ENCODE measurements at regions of chr1 and their contacts with region 1.

Region 1: GRCh38 chr1:65148548-65149350 is 746 bp downstream of the AK4 start:
- DNase-seq: peak; percentile 50 to 83
- H3K4me3 ChIP-seq: peak overlapping the region; percentile 43 to 77 (median 59)
- H3K27ac ChIP-seq: peak overlapping the region; percentile 13; the same call in 1 of the 2 replicates
- H3K4me1 ChIP-seq: peaks cover 9 to 15% (median 11%) of the 10 kb centered on the region in 4 experiments
- H3K27me3 ChIP-seq: peaks cover 2 to 22% (median 14%) of the 10 kb centered on the region in 4 experiments; a peak in 6 of 7 replicates
- CTCF ChIP-seq: no peak
- EP300 ChIP-seq: no peak
- POLR2A ChIP-seq: peak; percentile 45 to 70
- RAD21 ChIP-seq: no peak

Region 2: GRCh38 chr1:65159801-65160523 is 11.2 kb after region 1 on chr1:
- CTCF ChIA-PET with region 1: interaction called, 3 read pairs
- POLR2A ChIA-PET with region 1: interaction called, 48 read pairs
- DNase-seq: no peak
- H3K4me3 ChIP-seq: no peak overlapping the region
- H3K27ac ChIP-seq: no peak overlapping the region
- H3K4me1 ChIP-seq: peaks cover 0 to 3% (median 2%) of the 10 kb centered on the region in 4 experiments; a peak in 3 of 7 replicates
- H3K27me3 ChIP-seq: no peaks in the 10 kb centered on the region
- CTCF ChIP-seq: no peak
- EP300 ChIP-seq: no peak
- POLR2A ChIP-seq: no peak
- RAD21 ChIP-seq: no peak

Region 3: GRCh38 chr1:65165269-65165993 is 16.7 kb after region 1 on chr1:
- CTCF ChIA-PET with region 1: interaction called, 3 read pairs
- POLR2A ChIA-PET with region 1: interaction called, 48 read pairs
- DNase-seq: no peak
- H3K4me3 ChIP-seq: no peak overlapping the region
- H3K27ac ChIP-seq: no peak overlapping the region
- H3K4me1 ChIP-seq: peaks cover 0 to 12% (median 4%) of the 10 kb centered on the region in 4 experiments; a peak in 4 of 7 replicates
- H3K27me3 ChIP-seq: no peaks in the 10 kb centered on the region
- CTCF ChIP-seq: no peak
- EP300 ChIP-seq: no peak
- POLR2A ChIP-seq: no peak
- RAD21 ChIP-seq: no peak

Region 4: GRCh38 chr1:65174585-65174984 is 25.8 kb after region 1 on chr1:
- CTCF ChIA-PET with region 1: interaction called, 3 read pairs
- POLR2A ChIA-PET with region 1: interaction called, 48 read pairs
- DNase-seq: no peak
- H3K4me3 ChIP-seq: no peak overlapping the region
- H3K27ac ChIP-seq: no peak overlapping the region
- H3K4me1 ChIP-seq: peaks cover 4 to 23% (median 11%) of the 10 kb centered on the region in 4 experiments
- H3K27me3 ChIP-seq: no peaks in the 10 kb centered on the region
- CTCF ChIP-seq: no peak
- EP300 ChIP-seq: no peak
- POLR2A ChIP-seq: no peak
- RAD21 ChIP-seq: no peak

Region 5: GRCh38 chr1:65235867-65236805 is 87.4 kb after region 1 on chr1:
- CTCF ChIA-PET with region 1: no interaction called
- POLR2A ChIA-PET with region 1: no interaction called
- DNase-seq: no peak
- H3K4me3 ChIP-seq: no peak overlapping the region
- H3K27ac ChIP-seq: no peak overlapping the region
- H3K4me1 ChIP-seq: no peaks in the 10 kb centered on the region
- H3K27me3 ChIP-seq: no peaks in the 10 kb centered on the region
- CTCF ChIP-seq: peak in 2 of 3 experiments; percentile 55 to 65; a peak in 3 of 4 replicates
- EP300 ChIP-seq: no peak
- POLR2A ChIP-seq: no peak
- RAD21 ChIP-seq: peak; percentile 87 to 88

Measured in H1 (cell line).